ENCODE measurements at regions of chr12 and their contacts with region 1.

Region 1: DNA sequence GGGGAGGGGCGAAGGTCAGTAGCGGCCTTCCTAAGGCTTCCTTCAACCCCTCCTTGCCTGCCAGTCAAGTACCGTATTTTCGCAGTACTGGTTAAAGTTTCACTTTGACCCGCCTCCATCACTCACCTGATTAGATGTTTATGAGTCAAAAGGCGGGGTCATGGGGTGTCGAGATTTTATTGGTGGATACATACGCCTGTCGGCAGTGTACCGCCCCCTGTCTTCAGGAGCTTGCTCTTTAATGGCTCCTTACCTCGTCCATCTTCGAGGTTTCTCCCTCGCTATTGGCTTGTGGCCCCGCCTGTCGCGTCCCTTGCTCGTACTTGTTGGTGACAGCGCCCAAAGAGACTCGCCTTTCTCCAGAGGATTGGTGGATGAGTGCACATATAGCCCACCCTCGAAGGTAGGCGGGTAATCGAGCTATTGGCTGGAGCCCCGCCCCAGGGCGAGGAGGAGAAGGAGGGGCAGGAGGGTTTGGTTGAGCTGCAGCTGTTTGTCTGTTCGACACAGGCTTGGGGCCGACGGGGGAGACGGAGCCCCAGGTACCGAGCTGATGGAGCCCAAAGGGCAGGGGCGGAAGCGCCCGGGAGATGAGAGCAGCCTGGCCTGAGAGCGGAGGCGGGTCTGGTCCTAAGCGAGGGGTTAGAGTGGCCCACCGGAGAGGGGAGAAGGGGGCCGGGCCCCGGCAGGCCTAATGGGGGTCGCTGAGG is at the start of gene RAB5B:
- DNase-seq: peak; percentile 92 to 100 (median 96)
- ATAC-seq: peak; percentile 86
- H3K4me3 ChIP-seq: peak within 1 kb of the TSS; percentile 74
- H3K4me3 Mint-ChIP-seq: no peak within 1 kb of the TSS
- H3K27ac ChIP-seq: peak within 1 kb of the TSS; percentile 82 to 86
- H3K27ac Mint-ChIP-seq: no peak within 1 kb of the TSS
- H3K4me1 ChIP-seq: peaks cover 26% of the 10 kb centered on the region
- H3K4me1 Mint-ChIP-seq: peaks cover 18% of the 10 kb centered on the region
- H3K27me3 ChIP-seq: no peaks in the 10 kb centered on the region
- H3K27me3 Mint-ChIP-seq: no peaks in the 10 kb centered on the region
- CTCF ChIP-seq: no peak
- total RNA-seq, gene RAB5B: 21.6 to 27.4 TPM

Region 2: DNA sequence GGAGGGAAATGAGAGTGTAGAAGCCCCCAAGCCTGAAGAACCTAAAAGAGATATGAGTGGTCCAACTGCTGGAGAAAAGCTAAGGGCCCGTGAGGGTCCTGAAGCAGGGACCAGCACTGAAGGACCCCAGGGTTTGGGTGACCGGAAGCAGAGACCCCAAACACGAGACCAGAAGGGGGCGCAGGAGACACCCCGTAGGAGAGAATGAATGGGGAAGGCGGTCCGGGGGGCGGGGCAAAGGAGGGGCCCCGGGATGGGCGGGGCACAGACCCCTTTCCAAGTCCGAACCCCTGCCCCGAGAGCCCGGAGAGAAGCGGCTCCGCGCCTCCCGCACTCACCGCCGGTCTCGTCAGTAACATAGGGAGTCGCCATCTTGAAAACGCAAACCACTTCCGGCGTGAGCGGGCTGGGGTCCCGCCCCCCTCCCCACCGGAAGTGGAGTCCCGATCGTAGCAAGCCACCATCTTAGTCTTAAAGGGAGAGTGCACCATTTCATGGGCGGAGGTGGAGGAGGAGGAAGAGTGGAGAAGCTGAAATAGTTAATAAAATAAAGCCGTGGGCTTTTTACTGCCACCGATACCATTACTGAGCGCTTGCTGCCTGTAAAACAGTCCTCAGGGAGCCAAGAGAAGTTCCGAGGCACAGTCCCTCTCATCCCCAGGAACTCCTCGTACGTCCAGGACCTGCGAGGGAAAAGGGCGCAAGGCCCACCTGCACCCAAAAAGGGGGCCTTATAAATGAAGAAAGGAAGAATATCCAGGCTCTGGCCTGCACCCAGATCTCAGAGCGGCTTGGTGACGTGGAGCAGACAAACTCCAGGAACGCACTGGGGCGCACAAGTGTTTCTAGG is 46.8 kb before region 1 on chr12:
- CTCF ChIA-PET with region 1: interaction called, 5 read pairs
- POLR2A ChIA-PET with region 1: interaction called, 80 read pairs
- intact Hi-C with region 1: loop called (anchors 1 to 2 kb)
- DNase-seq: peak; percentile 83 to 96 (median 88)
- ATAC-seq: peak; percentile 32
- H3K4me3 ChIP-seq: peak overlapping the region; percentile 98
- H3K4me3 Mint-ChIP-seq: peak overlapping the region; percentile 96
- H3K27ac ChIP-seq: peak overlapping the region; percentile 72 to 93
- H3K27ac Mint-ChIP-seq: peak overlapping the region; percentile 97
- H3K4me1 ChIP-seq: peaks cover 45% of the 10 kb centered on the region
- H3K4me1 Mint-ChIP-seq: peaks cover 56% of the 10 kb centered on the region
- H3K27me3 ChIP-seq: no peaks in the 10 kb centered on the region
- H3K27me3 Mint-ChIP-seq: no peaks in the 10 kb centered on the region
- CTCF ChIP-seq: peak; percentile 86

Region 3: GRCh38 chr12:55955800-55956508 is 17.8 kb before region 1 on chr12:
- CTCF ChIA-PET with region 1: no interaction called
- POLR2A ChIA-PET with region 1: interaction called, 72 read pairs
- intact Hi-C with region 1: no loop called
- DNase-seq: peak in 12 of 14 experiments; percentile 24 to 75 (median 50)
- ATAC-seq: peak; percentile 77
- H3K4me3 ChIP-seq: no peak overlapping the region
- H3K4me3 Mint-ChIP-seq: no peak overlapping the region
- H3K27ac ChIP-seq: peak overlapping the region in 1 of 2 donors; percentile 24
- H3K27ac Mint-ChIP-seq: peak overlapping the region; percentile 66
- H3K4me1 ChIP-seq: peaks cover 20% of the 10 kb centered on the region
- H3K4me1 Mint-ChIP-seq: peaks cover 25% of the 10 kb centered on the region
- H3K27me3 ChIP-seq: no peaks in the 10 kb centered on the region
- H3K27me3 Mint-ChIP-seq: no peaks in the 10 kb centered on the region
- CTCF ChIP-seq: peak; percentile 47

Region 4: DNA sequence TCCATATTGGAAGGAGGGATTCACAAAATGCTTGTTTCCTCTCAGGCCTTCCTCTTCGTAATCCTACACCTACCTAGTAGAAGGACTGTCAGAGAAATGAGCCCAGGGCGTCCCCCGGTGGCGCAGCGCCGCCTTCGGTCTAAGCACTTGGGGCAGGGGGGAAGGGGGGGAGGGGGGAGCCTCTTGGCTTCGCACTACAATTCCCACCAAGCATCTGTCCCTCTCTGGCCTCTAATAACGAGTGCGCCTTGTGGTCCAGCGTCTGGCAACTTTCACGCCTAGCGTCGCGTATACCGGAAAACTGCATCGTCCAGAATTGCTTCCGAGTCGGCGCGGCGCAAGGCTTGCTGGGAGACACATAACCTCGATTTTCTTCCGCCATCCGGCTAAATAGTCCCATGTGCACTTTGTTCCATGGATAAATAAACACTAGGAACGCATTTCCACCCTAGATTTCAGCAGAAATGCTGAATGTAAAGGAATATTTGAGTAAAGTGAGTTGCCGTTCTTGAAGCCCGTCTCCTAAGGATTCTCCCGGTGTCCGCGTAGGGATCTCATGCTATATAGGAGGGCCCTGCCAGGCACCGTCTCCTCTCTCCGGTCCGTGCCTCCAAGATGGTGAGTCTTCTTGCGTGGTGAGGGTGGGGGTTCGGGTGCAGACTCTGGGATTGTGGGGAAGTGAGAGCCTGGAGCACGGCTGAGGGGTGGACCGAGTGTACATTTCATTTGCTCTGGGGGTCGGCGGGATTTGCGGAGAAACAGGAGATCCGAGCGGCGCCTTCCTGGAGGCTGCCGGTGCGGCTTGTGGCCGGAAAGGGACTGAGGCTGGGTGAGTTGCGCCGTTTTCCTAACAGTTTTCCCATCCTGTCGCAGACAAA is 68.0 kb after region 1 on chr12 and contains the start of gene RPS26:
- CTCF ChIA-PET with region 1: interaction called, 3 read pairs
- POLR2A ChIA-PET with region 1: interaction called, 10 read pairs
- intact Hi-C with region 1: no loop called
- DNase-seq: peak; percentile 81 to 99 (median 89)
- ATAC-seq: peak; percentile 92
- H3K4me3 ChIP-seq: peak within 1 kb of the TSS; percentile 95
- H3K4me3 Mint-ChIP-seq: peak within 1 kb of the TSS; percentile 94
- H3K27ac ChIP-seq: peak within 1 kb of the TSS; percentile 88 to 90
- H3K27ac Mint-ChIP-seq: peak within 1 kb of the TSS; percentile 86
- H3K4me1 ChIP-seq: peaks cover 32% of the 10 kb centered on the region
- H3K4me1 Mint-ChIP-seq: peaks cover 51% of the 10 kb centered on the region
- H3K27me3 ChIP-seq: no peaks in the 10 kb centered on the region
- H3K27me3 Mint-ChIP-seq: no peaks in the 10 kb centered on the region
- CTCF ChIP-seq: peak; percentile 43
- total RNA-seq, gene RPS26: 118 to 126 TPM

Region 5: DNA sequence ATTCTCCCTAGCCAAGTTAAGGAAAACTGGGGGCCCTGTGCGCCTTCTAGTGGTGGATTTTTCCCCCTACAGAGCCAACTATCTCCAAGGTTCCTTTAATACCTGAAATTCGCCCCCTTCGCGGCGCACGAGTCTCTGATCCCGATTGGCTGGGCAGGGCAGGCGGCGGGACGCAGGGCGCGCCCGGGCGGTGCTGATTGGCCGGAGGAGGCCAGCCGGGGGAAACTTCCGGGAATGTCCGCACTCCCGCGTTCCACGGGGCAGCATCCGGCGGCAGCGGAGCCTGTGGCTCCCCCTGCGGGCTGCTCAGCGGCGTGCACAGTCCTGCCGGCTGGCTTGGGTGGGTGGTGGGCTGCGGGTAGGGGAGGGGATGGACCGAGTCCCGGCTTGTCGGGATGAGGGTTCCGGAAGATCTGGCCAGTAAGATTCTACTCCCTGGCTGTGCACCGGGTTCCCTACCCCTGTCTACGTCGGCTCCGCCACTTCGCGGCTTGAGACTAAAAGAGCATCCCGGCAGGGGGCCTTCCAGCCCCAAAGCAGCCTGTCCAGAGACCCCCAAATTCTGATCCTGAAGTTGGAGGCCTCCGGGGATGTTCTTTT is 250.4 kb after region 1 on chr12 and contains the start of gene NABP2:
- CTCF ChIA-PET with region 1: no interaction called
- POLR2A ChIA-PET with region 1: interaction called, 10 read pairs
- intact Hi-C with region 1: no loop called
- DNase-seq: peak; percentile 73 to 96 (median 88)
- ATAC-seq: peak; percentile 66
- H3K4me3 ChIP-seq: peak within 1 kb of the TSS; percentile 70
- H3K4me3 Mint-ChIP-seq: peak within 1 kb of the TSS; percentile 98
- H3K27ac ChIP-seq: peak within 1 kb of the TSS; percentile 60 to 81
- H3K27ac Mint-ChIP-seq: peak within 1 kb of the TSS; percentile 100
- H3K4me1 ChIP-seq: peaks cover 56% of the 10 kb centered on the region
- H3K4me1 Mint-ChIP-seq: peaks cover 48% of the 10 kb centered on the region
- H3K27me3 ChIP-seq: no peaks in the 10 kb centered on the region
- H3K27me3 Mint-ChIP-seq: no peaks in the 10 kb centered on the region
- CTCF ChIP-seq: peak; percentile 88
- total RNA-seq, gene NABP2: 7.6 to 9.1 TPM

Region 6: GRCh38 chr12:57046947-57047890 is 1073.5 kb after region 1 on chr12:
- CTCF ChIA-PET with region 1: no interaction called
- POLR2A ChIA-PET with region 1: no interaction called
- intact Hi-C with region 1: no loop called
- DNase-seq: peak in 6 of 14 experiments; percentile 13 to 69 (median 44)
- ATAC-seq: peak; percentile 54
- H3K4me3 ChIP-seq: no peak overlapping the region
- H3K4me3 Mint-ChIP-seq: peak overlapping the region; percentile 14
- H3K27ac ChIP-seq: no peak overlapping the region
- H3K27ac Mint-ChIP-seq: peak overlapping the region; percentile 47
- H3K4me1 ChIP-seq: peaks cover 20% of the 10 kb centered on the region
- H3K4me1 Mint-ChIP-seq: peaks cover 33% of the 10 kb centered on the region
- H3K27me3 ChIP-seq: no peaks in the 10 kb centered on the region
- H3K27me3 Mint-ChIP-seq: no peaks in the 10 kb centered on the region
- CTCF ChIP-seq: no peak

Measured in CD4-positive, alpha-beta T cell (primary cell).